Activated B cell treated with CpG ODN at 0.5 μM for 24 hours (primary cell): ENCODE measurements at regions of chr12 and their contacts with region 1.

Region 1: DNA sequence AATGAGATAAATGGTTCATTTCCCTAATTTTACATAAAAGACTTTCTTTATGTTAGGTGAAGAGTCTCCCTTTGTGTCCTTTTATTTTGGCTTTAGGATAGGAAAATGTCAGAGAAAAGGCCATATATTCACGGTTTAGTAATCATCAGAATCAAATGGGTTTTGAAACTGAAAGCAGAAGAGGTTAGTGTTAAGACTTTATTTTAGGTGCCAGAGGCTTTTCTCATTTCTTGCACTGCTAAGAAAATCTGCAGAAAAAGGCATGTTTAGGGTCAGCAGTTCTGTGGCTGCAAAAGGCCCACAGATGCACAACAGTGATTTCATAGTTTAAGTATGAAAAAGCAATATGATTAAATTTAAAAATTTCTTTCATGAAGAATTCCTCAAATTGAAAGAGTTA is 80.4 kb upstream of the SINHCAF start:
- DNase-seq: no peak
- ATAC-seq: peak; percentile 39
- H3K4me3 Mint-ChIP-seq: peak overlapping the region; percentile 65
- H3K27ac Mint-ChIP-seq: peak overlapping the region; percentile 77
- H3K4me1 Mint-ChIP-seq: peaks cover 33% of the 10 kb centered on the region
- H3K27me3 Mint-ChIP-seq: no peaks in the 10 kb centered on the region
- CTCF ChIP-seq: no peak

Region 2: DNA sequence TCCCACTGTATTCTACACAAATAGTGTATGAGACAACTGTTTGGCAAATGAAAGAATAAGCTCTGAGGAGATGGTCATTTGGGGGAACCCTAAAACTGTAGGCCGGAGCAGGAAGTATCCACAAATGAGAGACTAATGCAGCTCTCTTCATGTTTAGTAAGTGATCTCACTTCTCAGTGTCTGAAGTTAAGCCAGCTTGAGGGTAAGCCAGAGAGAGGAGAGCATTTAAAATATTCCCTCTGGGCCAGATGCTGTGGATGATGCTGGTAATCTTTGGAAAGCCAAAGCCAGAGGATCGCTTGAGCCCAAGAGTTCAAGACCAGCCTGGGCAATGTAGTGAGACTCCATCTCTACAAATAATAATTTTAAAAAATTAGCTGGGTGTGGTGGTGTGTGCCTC is 50.2 kb after region 1 on chr12:
- CTCF ChIA-PET with region 1: interaction called, 4 read pairs
- POLR2A ChIA-PET with region 1: no interaction called
- intact Hi-C with region 1: loop called (anchors 5 kb)
- DNase-seq: no peak
- ATAC-seq: no peak
- H3K4me3 Mint-ChIP-seq: no peak overlapping the region
- H3K27ac Mint-ChIP-seq: no peak overlapping the region
- H3K4me1 Mint-ChIP-seq: peaks cover 12% of the 10 kb centered on the region
- H3K27me3 Mint-ChIP-seq: no peaks in the 10 kb centered on the region
- CTCF ChIP-seq: no peak

Region 3: GRCh38 chr12:31603546-31604009 is 197.2 kb after region 1 on chr12:
- CTCF ChIA-PET with region 1: interaction called, 3 read pairs
- POLR2A ChIA-PET with region 1: interaction called, 5 read pairs
- intact Hi-C with region 1: loop called (anchors 1 kb)
- DNase-seq: peak; percentile 34
- ATAC-seq: peak; percentile 87
- H3K4me3 Mint-ChIP-seq: peak overlapping the region; percentile 61
- H3K27ac Mint-ChIP-seq: peak overlapping the region; percentile 92
- H3K4me1 Mint-ChIP-seq: peaks cover 59% of the 10 kb centered on the region
- H3K27me3 Mint-ChIP-seq: no peaks in the 10 kb centered on the region
- CTCF ChIP-seq: no peak

Region 4: DNA sequence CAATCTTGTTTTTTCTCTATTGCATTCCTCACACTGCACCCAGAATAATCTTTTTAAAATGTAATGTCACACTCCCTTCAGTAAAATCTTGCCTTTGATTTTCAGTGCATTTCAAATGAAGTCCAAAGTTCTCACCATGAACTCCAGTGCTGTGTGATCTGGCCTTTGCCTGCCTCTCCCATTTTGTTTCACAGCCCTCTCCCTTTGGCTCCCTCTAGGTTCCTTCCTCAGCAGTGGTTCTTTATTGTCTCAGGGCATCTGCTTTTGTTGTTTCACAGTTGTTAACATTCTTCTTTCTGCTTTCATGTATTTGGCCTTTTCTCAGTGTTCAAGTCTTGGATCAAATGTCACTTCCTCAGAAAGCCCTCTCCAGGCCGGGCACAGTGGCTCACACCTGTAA is 407.0 kb after region 1 on chr12:
- CTCF ChIA-PET with region 1: no interaction called
- POLR2A ChIA-PET with region 1: interaction called, 4 read pairs
- intact Hi-C with region 1: loop called (anchors 10 kb)
- DNase-seq: no peak
- ATAC-seq: no peak
- H3K4me3 Mint-ChIP-seq: no peak overlapping the region
- H3K27ac Mint-ChIP-seq: peak overlapping the region; percentile 69
- H3K4me1 Mint-ChIP-seq: peaks cover 45% of the 10 kb centered on the region
- H3K27me3 Mint-ChIP-seq: no peaks in the 10 kb centered on the region
- CTCF ChIP-seq: no peak

Region 5: GRCh38 chr12:32312049-32312670 is 905.8 kb after region 1 on chr12:
- CTCF ChIA-PET with region 1: interaction called, 9 read pairs
- POLR2A ChIA-PET with region 1: no interaction called
- intact Hi-C with region 1: loop called (anchors 1 kb)
- DNase-seq: no peak
- ATAC-seq: peak; percentile 62
- H3K4me3 Mint-ChIP-seq: no peak overlapping the region
- H3K27ac Mint-ChIP-seq: peak overlapping the region; percentile 68
- H3K4me1 Mint-ChIP-seq: peaks cover 8% of the 10 kb centered on the region
- H3K27me3 Mint-ChIP-seq: no peaks in the 10 kb centered on the region
- CTCF ChIP-seq: no peak